Activated CD4-positive, alpha-beta T cell treated with anti-CD3 and anti-CD28 coated beads, Interleukin-2, amount 10 ng/mL, durations not matched to agents 24 days and 14 days (primary cell): ENCODE measurements at regions of chr10 and their contacts with region 1.

Region 1: DNA sequence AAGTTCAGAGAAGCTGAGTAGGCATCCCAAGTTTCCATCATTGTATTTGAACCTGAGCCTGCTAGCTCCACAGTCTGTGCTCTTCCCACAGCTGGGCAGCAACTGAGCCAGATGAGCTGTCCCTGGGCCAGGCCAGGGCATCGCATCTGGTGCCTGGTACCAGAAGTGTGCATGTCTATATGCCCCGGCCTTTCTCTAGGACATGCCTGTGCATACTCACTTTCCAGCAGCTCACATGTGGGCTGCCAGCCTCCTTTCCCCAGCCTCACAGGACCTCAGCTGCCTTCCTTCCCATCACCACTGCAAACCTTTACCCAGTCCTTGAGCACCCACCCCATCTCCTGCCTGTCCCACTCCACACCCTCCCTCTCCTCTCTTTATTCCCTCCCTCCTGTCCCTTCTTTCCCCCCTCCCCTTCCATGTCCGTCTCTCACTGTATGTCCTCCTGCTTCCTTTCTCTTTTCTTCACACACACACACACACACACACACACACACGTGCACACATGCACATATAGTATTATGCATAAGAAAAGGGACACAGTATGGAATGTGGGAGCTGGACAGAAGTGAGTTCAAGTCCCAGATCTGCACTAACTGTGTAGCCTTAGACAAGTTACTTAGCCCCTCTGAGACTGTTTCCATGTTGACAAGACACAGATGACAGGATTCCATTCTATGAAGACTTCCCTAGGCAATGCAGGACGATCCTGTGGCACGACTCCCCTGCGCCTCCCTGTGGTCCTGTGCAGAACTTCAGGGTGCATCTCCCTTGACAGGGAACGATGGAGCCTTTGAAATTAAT is 10.9 kb downstream of the CDHR1 start:
- DNase-seq: peak; percentile 89
- H3K4me3 Mint-ChIP-seq: no peak overlapping the region
- H3K27ac Mint-ChIP-seq: no peak overlapping the region
- H3K4me1 Mint-ChIP-seq: no peaks in the 10 kb centered on the region
- H3K27me3 Mint-ChIP-seq: peaks cover 14% of the 10 kb centered on the region

Region 2: DNA sequence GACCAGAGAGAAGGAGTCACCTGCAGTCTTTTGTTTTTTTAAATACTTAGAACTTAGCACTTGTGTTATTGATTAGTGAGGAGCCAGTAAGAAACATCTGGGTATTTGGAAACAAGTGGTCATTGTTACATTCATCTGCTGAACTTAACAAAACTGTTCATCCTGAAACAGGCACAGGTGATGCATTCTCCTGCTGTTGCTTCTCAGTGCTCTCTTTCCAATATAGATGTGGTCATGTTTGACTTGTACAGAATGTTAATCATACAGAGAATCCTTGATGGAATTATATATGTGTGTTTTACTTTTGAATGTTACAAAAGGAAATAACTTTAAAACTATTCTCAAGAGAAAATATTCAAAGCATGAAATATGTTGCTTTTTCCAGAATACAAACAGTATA is 52.5 kb before region 1 on chr10:
- intact Hi-C with region 1: loop called (anchors 1 kb)
- DNase-seq: no peak
- H3K4me3 Mint-ChIP-seq: no peak overlapping the region
- H3K27ac Mint-ChIP-seq: no peak overlapping the region
- H3K4me1 Mint-ChIP-seq: peaks cover 7% of the 10 kb centered on the region
- H3K27me3 Mint-ChIP-seq: no peaks in the 10 kb centered on the region